Activated T-helper 2 cell treated with anti-CD3 and anti-CD28 coated beads, Interferon-gamma antibody, Interleukin-2, Interleukin-4, amounts not matched to agents 10 μg/mL and 5 μg/mL and 100 μg/mL, durations not matched to agents 14 hours and 24 hours and 36 hours (primary cell): ENCODE measurements at regions of chr20 and their contacts with region 1.

Region 1: DNA sequence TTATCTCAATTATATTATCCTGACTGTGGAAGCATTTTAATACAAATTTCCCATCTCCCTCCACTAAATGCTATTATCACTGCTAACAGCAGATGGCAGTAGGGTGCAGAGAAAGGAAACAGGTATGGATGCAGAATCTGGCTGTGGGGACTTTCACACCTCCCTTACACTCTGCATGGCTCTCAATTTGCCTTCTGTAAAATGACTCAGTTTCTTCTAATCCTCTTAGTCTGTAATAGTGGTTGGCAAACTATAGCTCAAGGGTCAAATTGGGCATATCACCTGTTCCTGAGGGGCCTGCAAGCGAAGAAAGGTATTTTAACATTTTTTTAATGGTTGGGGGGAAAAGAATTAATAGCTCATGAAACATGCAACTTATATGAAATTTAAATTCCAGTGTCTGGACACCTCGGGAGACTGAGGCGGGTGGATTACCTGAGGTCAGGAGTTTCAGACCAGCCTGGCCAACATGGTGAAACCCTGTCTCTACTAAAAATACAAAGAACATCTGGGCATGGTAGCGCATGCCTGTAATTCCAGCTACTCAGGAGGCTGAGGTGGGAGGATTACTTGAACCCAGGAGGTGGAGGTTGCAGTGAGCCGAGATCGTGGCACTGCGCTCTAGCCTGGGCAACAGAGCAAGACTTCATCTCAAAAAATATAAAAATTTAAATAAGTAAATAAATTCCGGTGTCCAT is 83.5 kb downstream of the ZMYND8 start:
- DNase-seq: peak; percentile 33
- H3K4me3 Mint-ChIP-seq: peak overlapping the region; percentile 52
- H3K27ac Mint-ChIP-seq: peak overlapping the region; percentile 88
- H3K4me1 Mint-ChIP-seq: peaks cover 40% of the 10 kb centered on the region
- H3K27me3 Mint-ChIP-seq: no peaks in the 10 kb centered on the region

Region 2: DNA sequence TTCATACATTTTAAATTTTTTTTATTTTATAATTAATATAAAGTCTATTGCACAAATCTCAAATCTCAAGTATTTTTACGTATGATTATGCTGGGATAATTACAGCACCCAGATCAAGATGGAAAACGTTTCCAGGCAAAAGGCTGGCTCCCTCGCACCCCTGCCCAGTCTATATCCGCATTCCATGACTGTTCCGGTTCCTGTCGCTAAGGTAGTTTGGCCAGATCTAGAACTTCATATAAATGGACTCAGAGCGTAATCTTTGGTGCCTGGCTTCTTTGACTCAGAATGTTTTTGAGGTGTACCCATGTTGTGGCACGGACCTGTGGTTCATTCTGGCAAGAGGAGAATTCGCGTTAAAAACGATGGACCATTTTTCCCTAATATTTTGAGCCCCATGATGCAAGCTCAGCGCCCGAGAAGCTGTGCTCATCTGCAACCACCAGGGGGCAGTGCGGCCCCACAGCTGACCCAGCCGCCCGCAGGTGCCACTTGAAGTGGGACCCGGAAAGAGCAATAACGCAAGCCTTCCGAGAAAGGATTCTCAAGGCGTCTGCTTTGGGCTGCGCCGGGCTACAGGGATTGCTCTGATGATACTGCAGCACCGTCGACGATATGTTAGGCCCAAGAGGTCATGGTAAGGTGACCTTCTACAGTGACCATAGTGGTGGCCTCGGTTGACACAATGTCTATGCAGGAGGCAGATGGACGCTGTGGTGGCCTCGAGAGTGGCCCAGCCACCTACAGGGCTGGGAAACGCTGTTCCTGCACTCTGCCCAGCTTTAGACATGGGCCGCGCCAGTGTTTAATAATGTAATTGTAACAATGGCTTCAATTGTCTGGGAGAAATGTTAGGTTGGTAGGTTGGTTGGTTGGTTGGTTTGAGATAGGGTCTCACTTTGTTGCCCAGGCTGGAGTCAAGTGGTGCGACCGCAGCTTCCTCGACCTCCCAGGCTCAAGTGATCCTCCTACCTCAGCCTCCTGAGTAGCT is 76.7 kb before region 1 on chr20:
- intact Hi-C with region 1: loop called (anchors 1 kb)
- DNase-seq: peak; percentile 69
- H3K4me3 Mint-ChIP-seq: no peak overlapping the region
- H3K27ac Mint-ChIP-seq: no peak overlapping the region
- H3K4me1 Mint-ChIP-seq: peaks cover 18% of the 10 kb centered on the region
- H3K27me3 Mint-ChIP-seq: peaks cover 12% of the 10 kb centered on the region

Region 3: DNA sequence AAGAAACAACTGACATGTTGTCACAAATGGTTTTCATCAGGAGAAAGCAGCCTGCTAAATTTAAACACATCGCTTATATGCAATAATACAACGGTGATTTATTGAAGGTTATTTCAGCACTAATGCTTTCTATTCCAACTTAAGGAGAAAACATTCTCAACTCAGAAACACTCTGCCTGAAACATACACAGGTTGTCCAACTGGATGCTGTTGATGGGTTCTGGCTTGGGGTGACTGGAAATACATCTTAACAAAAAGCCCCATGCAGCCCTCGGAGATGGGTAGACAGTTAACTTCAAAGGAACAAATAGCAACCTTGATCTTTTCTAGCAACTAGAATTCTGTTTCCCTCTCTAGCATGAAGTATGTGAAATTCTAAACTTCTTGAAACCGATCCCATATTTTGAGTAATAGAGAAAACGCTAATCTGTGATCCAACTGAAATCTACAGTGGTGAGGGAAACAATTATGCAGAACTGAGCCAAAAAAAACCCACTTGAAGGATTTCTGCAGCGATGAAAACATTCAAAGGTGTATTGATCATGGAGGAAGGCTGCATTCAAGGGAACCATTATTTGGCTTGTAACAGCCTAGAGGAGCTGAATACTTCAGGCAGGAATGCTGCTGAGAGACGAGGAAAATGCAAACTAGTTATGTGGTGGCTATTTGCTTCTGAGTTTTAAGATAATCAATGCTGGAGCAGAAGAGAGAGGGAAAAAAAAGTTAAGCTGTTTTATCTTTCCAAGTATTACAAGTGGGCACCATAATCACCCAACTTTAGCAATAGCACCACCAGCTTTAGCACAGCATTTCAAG is 76.5 kb after region 1 on chr20:
- intact Hi-C with region 1: loop called (anchors 1 kb)
- DNase-seq: no peak
- H3K4me3 Mint-ChIP-seq: no peak overlapping the region
- H3K27ac Mint-ChIP-seq: no peak overlapping the region
- H3K4me1 Mint-ChIP-seq: peaks cover 27% of the 10 kb centered on the region
- H3K27me3 Mint-ChIP-seq: no peaks in the 10 kb centered on the region

Region 4: GRCh38 chr20:47379433-47380150 is 106.5 kb after region 1 on chr20:
- intact Hi-C with region 1: loop called (anchors 1 kb)
- DNase-seq: no peak
- H3K4me3 Mint-ChIP-seq: no peak overlapping the region
- H3K27ac Mint-ChIP-seq: peak overlapping the region; percentile 44
- H3K4me1 Mint-ChIP-seq: peaks cover 15% of the 10 kb centered on the region
- H3K27me3 Mint-ChIP-seq: no peaks in the 10 kb centered on the region

Region 5: GRCh38 chr20:47487175-47487917 is 214.3 kb after region 1 on chr20:
- intact Hi-C with region 1: loop called (anchors 1 kb)
- DNase-seq: peak; percentile 69
- H3K4me3 Mint-ChIP-seq: peak overlapping the region; percentile 60
- H3K27ac Mint-ChIP-seq: peak overlapping the region; percentile 99
- H3K4me1 Mint-ChIP-seq: peaks cover 53% of the 10 kb centered on the region
- H3K27me3 Mint-ChIP-seq: no peaks in the 10 kb centered on the region

Region 6: DNA sequence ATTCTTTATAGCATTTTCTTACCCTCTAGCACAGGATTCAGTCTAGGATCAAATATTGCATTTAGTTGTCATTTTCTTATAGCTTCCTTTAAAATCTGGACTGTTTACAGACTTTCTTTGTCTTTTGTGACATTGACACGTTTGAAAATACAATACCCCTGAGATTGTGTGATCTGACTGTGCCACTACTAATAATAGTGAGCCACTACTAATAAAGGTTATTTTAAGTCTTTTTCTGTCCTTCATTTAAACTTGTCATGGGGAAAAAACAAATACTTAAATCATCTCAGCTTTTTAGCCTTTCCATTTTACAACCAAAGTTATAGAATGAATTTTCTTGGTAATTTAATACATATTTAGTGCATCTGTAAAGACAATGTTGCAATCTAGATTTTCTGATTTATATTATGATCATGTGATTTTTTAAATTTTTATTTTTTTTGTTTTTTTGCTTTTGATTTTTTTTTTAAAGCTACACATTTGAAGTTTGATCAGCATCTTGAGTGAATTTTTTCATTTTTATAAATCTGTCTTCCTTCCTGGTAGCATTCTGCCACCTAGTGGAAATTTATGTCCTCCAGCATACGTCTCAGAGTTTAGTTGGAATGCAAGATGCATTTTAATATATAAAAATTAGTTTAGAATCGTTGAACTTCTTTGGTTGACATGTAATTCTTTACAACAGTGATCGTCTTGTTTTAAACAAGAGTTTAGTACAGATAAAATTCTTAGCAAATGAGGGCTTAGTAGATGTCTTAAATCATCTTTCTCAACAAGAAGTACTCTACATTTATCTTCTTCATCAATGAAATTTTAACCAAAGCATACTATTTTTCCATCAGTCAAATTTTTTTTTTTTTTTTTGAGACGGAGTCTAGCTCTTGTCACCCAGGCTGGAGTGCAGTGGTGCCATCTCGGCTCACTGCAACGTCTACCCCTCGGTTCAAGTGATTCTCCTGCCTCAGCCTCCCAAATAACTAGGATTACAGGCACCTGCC is 348.1 kb after region 1 on chr20:
- intact Hi-C with region 1: loop called (anchors 1 kb)
- DNase-seq: no peak
- H3K4me3 Mint-ChIP-seq: no peak overlapping the region
- H3K27ac Mint-ChIP-seq: peak overlapping the region; percentile 48
- H3K4me1 Mint-ChIP-seq: peaks cover 36% of the 10 kb centered on the region
- H3K27me3 Mint-ChIP-seq: no peaks in the 10 kb centered on the region